AG04449 (cell line): ENCODE measurements at regions of chr20 and their contacts with region 1.

Region 1: DNA sequence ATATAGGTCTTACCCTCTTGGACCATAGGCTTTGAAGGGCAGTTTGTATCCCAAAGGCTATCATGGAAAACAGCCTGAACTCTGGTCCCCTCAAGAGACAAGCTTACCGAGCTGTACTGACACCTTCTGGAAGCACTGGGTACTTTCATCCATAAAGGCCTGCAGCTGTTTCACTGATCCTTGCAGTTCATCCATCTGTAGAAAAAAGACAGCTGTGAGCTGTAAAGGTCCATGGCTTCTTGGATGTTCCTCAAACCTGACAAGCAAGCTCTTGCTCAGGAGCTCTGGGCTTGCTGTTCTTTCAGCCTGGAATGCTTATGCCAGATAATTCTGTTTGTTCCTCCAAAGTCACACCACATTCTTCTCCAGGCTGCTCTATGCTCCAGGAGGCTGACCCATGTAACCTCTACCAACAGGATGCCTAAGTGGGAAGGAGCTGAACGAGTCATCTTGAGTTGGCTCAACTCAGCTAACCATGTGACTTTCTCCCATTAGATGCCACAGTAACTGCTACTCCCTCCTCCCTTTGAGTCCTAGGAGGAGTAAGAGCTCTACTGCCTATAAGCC is 8.8 kb upstream of the NDRG3 start:
- DNase-seq: peak; percentile 10
- H3K4me3 ChIP-seq: no peak overlapping the region
- CTCF ChIP-seq: peak; percentile 83

Region 2: GRCh38 chr20:36562724-36563123 is 192.0 kb before region 1 on chr20:
- CTCF ChIA-PET with region 1: interaction called, 21 read pairs
- POLR2A ChIA-PET with region 1: no interaction called
- DNase-seq: no peak
- H3K4me3 ChIP-seq: no peak overlapping the region
- CTCF ChIP-seq: no peak

Region 3: GRCh38 chr20:36666181-36666740 is 88.5 kb before region 1 on chr20:
- CTCF ChIA-PET with region 1: interaction called, 37 read pairs
- POLR2A ChIA-PET with region 1: interaction called, 3 read pairs
- DNase-seq: peak; percentile 16
- H3K4me3 ChIP-seq: no peak overlapping the region
- CTCF ChIP-seq: no peak

Region 4: DNA sequence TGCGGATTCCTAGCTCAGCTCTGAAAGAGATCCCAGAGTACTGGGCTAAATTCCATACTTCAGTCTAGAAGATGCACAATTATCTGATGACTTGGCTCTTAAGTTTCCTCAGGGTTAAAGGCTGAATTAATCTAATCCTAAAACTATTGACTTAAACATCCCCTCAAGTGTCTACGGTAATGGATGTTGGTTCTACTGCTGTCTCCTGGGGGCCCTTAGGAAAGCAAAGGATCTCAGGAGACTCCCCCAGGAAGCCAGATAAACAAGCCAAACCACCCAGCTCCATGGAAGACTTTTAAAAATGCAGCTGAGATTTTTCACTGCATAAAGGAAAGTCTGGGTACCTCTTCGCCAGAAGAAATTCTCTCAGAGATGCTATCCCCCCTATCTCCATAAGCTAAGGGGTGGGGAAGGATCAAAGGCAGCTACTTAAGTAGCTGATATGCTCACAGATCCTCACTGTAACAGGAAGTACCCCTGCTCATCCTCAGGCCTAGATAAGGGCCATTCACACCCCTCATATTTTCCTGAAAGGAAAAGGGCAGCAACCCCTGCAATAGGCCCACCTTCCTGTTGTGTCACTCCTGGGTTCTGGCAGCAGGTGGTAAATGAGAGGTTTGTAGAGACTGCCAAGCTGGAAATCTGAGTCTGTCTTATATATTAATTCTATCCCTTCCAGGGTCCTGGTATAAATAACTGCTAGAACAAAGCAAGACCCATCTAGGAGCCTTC is 18.1 kb before region 1 on chr20:
- CTCF ChIA-PET with region 1: interaction called, 16 read pairs
- POLR2A ChIA-PET with region 1: no interaction called
- DNase-seq: no peak
- H3K4me3 ChIP-seq: no peak overlapping the region
- CTCF ChIP-seq: no peak

Region 5: GRCh38 chr20:36861875-36862801 is 107.4 kb after region 1 on chr20:
- CTCF ChIA-PET with region 1: interaction called, 11 read pairs
- POLR2A ChIA-PET with region 1: no interaction called
- DNase-seq: no peak
- H3K4me3 ChIP-seq: peak overlapping the region; percentile 69
- CTCF ChIP-seq: no peak

Region 6: GRCh38 chr20:37552415-37552814 is 797.7 kb after region 1 on chr20:
- CTCF ChIA-PET with region 1: no interaction called
- POLR2A ChIA-PET with region 1: no interaction called
- DNase-seq: no peak
- H3K4me3 ChIP-seq: no peak overlapping the region
- CTCF ChIP-seq: no peak